Activated T-helper 1 cell treated with anti-CD3 and anti-CD28 coated beads, Interleukin-12 subunit alpha, Interleukin-12 subunit beta, Interleukin-2, Interleukin-4 antibody, amounts not matched to agents 30 ng/mL and 10 ng/mL and 1 ng/mL, durations not matched to agents 14 hours and 24 hours and 36 hours (primary cell): ENCODE measurements at regions of chr17 and their contacts with region 1.

Region 1: DNA sequence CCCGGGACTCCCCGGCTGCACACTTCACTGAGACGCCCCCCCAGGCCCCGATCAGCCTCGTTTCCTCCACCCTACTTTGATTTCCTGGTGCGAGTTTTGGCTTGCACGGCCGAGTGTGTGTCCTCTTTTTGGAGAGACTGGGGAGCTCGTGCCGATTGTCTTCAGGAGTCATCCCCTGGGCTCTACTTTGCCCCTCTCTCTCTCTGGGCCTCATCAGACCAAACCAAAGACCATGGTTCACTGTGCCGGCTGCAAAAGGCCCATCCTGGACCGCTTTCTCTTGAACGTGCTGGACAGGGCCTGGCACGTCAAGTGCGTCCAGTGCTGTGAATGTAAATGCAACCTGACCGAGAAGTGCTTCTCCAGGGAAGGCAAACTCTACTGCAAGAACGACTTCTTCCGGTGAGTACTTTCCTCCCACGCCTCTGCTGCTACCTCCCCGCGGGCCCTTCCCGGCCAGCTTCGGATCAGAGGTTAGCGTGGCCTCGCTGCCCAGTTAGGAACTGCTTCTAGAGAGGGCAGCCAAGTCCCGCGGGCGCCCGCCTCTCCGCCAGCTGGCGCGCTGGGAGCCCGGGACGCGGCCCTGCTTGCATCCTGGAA is 791 bp downstream of the LHX1 start:
- DNase-seq: no peak
- H3K4me3 Mint-ChIP-seq: peak overlapping the region; percentile 73
- H3K27ac Mint-ChIP-seq: peak overlapping the region; percentile 79
- H3K4me1 Mint-ChIP-seq: peaks cover 32% of the 10 kb centered on the region
- H3K27me3 Mint-ChIP-seq: peaks cover 70% of the 10 kb centered on the region

Region 2: DNA sequence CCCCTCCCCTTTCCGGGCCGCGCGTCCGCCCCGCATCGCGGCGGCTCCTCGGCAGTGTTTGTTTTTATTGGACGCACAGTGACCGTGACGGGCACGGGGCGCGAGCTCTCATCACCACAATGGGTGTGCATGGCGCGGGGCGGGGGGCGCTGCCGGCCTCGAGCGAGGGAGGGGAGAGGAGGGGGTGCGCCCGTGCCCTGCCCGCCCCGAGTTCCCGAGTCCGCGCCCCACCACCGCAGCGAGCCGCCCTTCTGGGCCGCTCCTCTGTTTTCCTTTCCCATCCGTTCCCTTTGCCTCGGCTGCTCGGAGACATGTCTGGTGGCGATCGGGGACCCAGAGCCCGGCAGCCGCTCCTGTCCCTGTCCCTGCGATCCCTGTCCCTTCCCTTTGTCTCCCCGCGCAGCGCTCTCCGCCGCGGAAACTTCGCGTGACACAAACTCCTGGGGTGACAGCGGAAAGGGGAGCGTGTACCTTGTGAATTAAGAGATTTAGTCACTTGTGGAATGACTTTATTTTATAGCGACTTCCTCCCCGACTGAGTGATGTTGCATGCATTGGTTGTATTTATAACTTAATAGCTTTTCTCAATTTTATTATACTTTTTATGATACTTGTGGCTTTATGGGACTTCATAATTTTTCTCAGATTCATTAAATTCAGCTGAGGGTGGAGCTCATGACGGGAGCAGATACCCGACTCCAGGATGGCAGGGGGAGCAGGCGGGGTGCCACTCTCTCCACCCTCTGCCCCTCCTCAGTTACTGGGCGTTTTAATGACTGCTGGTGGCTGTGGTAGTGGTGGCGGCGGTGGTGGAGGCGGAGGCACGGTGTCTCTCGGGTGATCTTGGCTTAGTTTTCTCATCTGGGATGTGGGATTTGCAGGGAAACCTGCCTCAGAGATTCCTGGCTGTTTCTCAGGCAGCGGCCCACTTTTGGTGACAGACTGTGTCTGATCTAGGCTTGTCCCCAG is 295.9 kb before region 1 on chr17:
- intact Hi-C with region 1: loop called (anchors 5 kb)
- DNase-seq: no peak
- H3K4me3 Mint-ChIP-seq: peak overlapping the region; percentile 79
- H3K27ac Mint-ChIP-seq: peak overlapping the region; percentile 40
- H3K4me1 Mint-ChIP-seq: peaks cover 14% of the 10 kb centered on the region
- H3K27me3 Mint-ChIP-seq: peaks cover 65% of the 10 kb centered on the region

Region 3: GRCh38 chr17:36705874-36706731 is 232.0 kb before region 1 on chr17:
- intact Hi-C with region 1: loop called (anchors 5 kb)
- DNase-seq: peak; percentile 16
- H3K4me3 Mint-ChIP-seq: no peak overlapping the region
- H3K27ac Mint-ChIP-seq: no peak overlapping the region
- H3K4me1 Mint-ChIP-seq: no peaks in the 10 kb centered on the region
- H3K27me3 Mint-ChIP-seq: peaks cover 40% of the 10 kb centered on the region

Region 4: GRCh38 chr17:36808181-36808661 is 129.8 kb before region 1 on chr17:
- intact Hi-C with region 1: loop called (anchors 5 kb)
- DNase-seq: no peak
- H3K4me3 Mint-ChIP-seq: no peak overlapping the region
- H3K27ac Mint-ChIP-seq: no peak overlapping the region
- H3K4me1 Mint-ChIP-seq: no peaks in the 10 kb centered on the region
- H3K27me3 Mint-ChIP-seq: peaks cover 54% of the 10 kb centered on the region

Region 5: DNA sequence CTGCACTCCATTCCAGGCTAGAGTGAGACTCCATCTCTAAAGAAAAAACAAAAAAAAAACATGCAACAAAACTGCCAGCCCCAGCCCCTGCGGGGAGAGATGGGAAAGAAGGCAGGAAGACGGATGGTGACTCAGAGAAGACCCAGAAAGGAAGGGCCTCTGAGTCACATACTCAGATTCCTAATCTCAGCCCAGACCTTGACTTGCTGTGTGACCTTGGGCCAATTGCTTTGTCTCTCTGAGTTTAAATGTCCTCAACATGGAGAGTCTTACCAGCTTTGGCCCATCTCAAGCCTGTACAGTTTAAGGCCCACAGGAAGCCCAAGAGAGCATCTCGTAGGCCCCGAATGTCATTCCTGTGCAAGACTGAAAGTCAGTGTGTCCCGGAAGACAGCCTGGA is 87.3 kb before region 1 on chr17:
- intact Hi-C with region 1: no loop called
- DNase-seq: no peak
- H3K4me3 Mint-ChIP-seq: no peak overlapping the region
- H3K27ac Mint-ChIP-seq: no peak overlapping the region
- H3K4me1 Mint-ChIP-seq: peaks cover 20% of the 10 kb centered on the region
- H3K27me3 Mint-ChIP-seq: peaks cover 9% of the 10 kb centered on the region